AG04449 (cell line): ENCODE measurements at regions of chr12 and their contacts with region 1.

Region 1: GRCh38 chr12:25436203-25437030 is 116.7 kb downstream of the LMNTD1 start:
- DNase-seq: no peak
- H3K4me3 ChIP-seq: peak overlapping the region; percentile 23; the same call in 1 of the 2 replicates
- CTCF ChIP-seq: peak; percentile 73

Region 2: DNA sequence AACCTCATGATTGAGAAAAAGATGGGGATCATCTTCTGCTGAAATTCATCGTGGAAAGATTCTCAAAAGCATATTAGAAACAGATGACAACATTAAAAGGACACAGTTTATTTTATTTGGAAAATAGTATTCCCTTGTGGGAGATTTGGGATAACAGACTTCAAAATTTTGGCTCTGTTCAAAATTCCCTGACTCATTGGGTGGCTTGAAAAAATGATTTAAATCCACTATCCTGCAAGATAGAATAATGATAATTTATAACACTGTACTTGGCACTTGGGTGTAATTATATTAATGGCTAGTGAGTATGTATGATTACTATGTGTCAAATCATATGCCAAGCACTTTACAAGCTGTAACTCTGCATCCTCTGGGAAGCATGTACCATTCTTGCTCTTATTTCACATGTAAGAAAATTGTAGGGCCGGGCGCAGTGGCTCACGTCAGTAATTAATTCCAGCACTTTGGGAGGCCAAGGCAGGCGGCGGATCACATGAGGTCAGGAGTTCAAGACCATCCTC is 12.1 kb before region 1 on chr12:
- CTCF ChIA-PET with region 1: interaction called, 18 read pairs
- POLR2A ChIA-PET with region 1: no interaction called
- DNase-seq: no peak
- H3K4me3 ChIP-seq: no peak overlapping the region
- CTCF ChIP-seq: no peak

Region 3: DNA sequence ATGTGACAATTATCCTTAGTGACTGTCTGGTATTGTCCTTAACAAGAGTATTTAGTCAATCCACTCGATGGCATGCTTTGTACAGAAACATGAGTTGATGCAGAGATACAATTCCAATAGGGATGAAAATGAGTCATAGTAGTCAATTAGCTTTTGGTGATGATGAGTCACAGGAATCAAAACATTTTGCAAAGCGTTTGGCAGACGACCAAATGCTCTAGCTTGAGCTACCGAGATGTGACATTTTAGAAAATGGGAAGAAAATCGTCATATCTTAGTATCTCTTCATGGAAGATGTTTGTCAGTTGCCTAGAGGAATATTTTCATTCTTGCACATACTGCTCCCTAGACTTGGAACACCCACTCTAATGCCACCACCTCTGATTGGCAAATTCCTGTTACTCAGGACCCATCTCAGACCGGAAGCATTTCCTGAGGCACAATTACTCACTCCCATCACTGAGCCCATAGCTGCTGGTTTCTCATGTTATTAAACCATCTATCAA is 21.7 kb after region 1 on chr12:
- CTCF ChIA-PET with region 1: interaction called, 11 read pairs
- POLR2A ChIA-PET with region 1: no interaction called
- DNase-seq: peak; percentile 89
- H3K4me3 ChIP-seq: peak overlapping the region; percentile 26
- CTCF ChIP-seq: no peak

Region 4: GRCh38 chr12:25958428-25959070 is 522.1 kb after region 1 on chr12 and contains the start of gene RASSF8:
- CTCF ChIA-PET with region 1: interaction called, 11 read pairs
- POLR2A ChIA-PET with region 1: no interaction called
- DNase-seq: no peak
- H3K4me3 ChIP-seq: peak within 1 kb of the TSS; percentile 92
- CTCF ChIP-seq: no peak

Region 5: DNA sequence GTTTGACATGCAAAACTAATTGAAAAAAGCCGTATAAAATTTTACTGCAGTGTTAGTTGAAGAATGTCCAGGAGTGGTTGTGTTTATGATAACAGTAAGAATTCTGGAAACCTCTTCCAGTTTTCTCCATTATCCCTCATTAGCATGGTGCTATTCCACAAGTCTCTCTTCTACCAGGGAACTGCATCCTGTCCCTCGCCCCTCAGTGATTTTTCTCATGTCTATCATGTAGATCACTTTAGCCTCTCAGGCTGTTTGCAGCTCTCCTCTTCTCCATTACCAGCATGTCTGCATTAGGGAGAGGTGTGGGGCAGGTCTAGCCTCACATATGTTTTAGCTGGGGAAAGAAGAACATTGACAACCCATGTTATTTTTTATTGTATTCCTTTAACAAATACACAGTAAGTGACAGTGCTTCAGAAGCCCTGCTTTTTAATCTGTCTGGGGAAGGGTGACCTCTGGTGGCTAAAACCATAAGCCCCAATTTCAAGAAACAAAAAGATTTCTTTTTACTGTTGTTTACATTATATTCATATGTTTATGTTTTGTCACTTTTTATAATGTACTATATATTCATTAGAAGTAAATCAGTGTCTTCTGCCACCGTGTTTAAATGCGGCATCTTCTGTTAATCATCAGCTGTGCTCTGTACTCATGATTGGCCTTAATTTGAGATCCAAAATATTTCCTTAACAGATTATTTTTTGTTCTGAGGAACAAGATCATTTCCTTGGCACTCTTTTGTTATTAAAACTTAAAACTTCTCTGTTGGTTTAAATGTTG is 592.7 kb after region 1 on chr12:
- CTCF ChIA-PET with region 1: interaction called, 15 read pairs
- POLR2A ChIA-PET with region 1: no interaction called
- DNase-seq: no peak
- H3K4me3 ChIP-seq: no peak overlapping the region
- CTCF ChIP-seq: peak; percentile 40